ENCODE measurements at regions of chr17 and their contacts with region 1.

Region 1: DNA sequence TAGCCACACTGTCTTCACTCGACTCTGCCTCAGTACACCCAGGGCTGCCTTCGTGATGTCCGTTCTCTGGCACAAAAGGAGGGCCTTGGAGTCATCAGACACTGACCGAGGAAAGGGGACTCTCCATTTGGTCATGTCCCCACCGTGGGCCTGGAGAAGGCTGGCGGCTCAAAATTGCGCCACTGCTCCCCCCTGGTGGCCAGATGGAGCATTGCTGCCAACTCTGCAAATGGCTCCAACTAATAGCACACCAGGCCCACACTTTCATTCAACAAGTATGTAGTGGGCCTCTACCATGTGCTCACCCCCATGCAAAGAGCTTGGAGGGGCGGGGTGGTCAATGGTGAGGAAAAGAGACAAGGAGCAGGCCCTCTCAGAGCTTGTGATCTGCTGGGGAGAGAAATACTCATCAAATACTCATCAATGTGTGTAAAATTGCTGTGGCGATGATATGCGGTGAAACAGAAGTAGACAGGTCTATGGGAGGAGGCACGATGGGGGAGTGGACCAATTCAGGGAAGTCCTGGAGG is 5.2 kb upstream of the GRIN2C start:
- DNase-seq: no peak
- H3K4me3 ChIP-seq: no peak overlapping the region
- CTCF ChIP-seq: peak; percentile 92

Region 2: DNA sequence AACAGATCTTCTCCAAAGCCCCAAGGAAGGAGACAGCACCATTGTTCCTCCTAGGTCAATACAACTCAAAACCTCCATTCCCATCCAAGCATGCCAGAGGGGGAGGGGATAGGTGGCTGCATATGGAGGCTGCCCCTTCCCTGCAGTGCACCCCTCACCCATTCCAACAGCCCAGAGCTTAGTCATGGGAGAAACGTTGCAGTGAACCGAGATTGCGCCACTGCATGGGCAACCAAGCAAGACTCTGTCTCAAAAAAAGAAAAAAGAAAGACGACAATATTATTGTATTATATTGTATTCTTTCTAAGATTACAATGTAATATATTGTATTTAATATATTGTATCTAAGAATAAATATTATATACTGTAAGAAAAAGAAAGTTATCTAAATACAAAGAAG is 205.0 kb before region 1 on chr17:
- CTCF ChIA-PET with region 1: interaction called, 24 read pairs
- POLR2A ChIA-PET with region 1: interaction called, 3 read pairs
- DNase-seq: no peak
- H3K4me3 ChIP-seq: no peak overlapping the region
- CTCF ChIP-seq: no peak

Region 3: GRCh38 chr17:74742153-74742515 is 122.8 kb before region 1 on chr17:
- CTCF ChIA-PET with region 1: interaction called, 185 read pairs
- POLR2A ChIA-PET with region 1: no interaction called
- DNase-seq: no peak
- H3K4me3 ChIP-seq: no peak overlapping the region
- CTCF ChIP-seq: no peak

Region 4: GRCh38 chr17:74776044-74776977 is 88.6 kb before region 1 on chr17 and contains the start of gene NAT9:
- CTCF ChIA-PET with region 1: interaction called, 90 read pairs
- POLR2A ChIA-PET with region 1: no interaction called
- DNase-seq: peak; percentile 34
- H3K4me3 ChIP-seq: peak within 1 kb of the TSS; percentile 98
- CTCF ChIP-seq: no peak

Region 5: DNA sequence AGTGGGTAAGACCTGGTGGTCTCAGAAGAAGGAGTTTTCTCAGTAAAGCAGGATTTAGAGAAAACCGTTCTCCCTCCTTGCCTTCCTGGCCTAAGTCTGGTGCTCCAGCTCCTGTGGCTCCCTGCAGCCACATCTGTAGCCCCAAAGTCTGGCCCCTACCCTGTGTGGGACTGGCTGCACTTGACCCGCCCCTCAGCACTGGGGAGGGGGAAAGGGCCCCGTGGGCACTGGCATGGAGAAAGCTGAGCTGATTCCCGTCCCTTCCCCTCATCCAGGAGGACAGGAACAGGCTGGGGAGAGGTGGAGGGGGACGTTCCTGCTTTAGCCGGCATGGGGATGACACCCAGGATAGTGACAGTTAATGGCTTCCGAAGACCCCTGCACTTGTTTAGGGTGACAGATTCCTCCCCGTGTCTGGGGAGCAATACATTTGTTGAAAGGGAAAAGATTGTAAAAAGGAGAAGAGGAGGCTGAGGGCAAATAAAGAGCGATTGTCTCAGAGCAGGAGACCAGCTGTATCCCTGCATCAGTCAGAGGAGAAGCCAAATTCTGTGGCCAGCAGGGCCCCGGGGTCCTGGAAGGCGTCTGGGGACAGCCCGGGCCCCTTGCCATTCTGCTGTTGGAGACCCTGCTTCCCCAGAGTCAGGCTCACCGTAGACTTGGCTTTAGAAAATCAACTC is 43.1 kb before region 1 on chr17:
- CTCF ChIA-PET with region 1: interaction called, 12 read pairs
- POLR2A ChIA-PET with region 1: no interaction called
- DNase-seq: no peak
- H3K4me3 ChIP-seq: no peak overlapping the region
- CTCF ChIP-seq: no peak

Region 6: GRCh38 chr17:74842599-74843351 is 22.2 kb before region 1 on chr17:
- CTCF ChIA-PET with region 1: interaction called, 276 read pairs
- POLR2A ChIA-PET with region 1: no interaction called
- DNase-seq: no peak
- H3K4me3 ChIP-seq: peak overlapping the region; percentile 42
- CTCF ChIP-seq: peak; percentile 71

Region 7: GRCh38 chr17:74882255-74883040 is 17.5 kb after region 1 on chr17:
- CTCF ChIA-PET with region 1: interaction called, 14 read pairs
- POLR2A ChIA-PET with region 1: no interaction called
- DNase-seq: no peak
- H3K4me3 ChIP-seq: no peak overlapping the region
- CTCF ChIP-seq: no peak

Region 8: DNA sequence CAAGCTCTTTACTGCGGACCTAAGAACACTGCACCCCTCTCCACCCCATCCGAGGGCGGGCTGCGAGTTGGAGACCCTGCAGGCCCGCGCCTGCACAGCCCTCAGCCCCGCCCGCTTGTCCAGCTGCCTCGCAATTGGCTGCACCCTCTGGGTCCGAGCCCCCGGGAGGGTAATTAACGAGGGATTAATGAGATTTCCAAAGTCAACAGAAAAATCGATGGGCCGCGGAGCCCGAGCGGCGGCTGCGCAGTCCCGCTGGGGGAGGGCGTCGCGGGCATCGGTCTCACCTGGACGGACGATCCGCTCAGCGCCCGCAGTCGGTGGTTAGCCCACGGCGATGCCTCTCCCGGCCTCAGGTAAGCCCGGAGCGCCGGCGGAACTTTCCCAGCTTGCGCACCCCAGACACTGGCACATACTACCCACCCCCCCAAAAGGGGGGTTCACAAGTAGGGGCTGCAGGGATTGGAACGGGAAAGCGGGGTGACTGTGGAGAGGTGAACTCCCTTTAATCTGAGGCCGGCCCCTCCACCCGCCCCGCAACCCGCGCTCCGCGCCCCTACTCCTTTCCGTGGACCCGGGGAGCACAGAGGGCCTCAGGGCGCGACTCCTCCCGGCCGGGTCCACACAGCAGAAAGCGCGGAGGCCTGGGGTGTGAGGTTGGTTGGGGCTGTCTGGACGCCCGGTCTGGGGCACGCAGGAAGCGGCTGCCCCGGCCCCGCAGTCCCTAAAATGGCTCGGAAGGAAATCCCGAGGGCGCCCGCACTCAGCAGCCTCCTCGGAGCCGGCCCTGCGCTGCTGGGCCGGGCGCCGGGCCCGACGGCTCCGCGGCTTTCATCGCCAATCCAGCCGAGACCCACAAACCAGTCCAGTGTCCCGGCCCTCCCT is 70.9 kb after region 1 on chr17 and contains the start of gene OTOP3:
- CTCF ChIA-PET with region 1: no interaction called
- POLR2A ChIA-PET with region 1: no interaction called
- DNase-seq: no peak
- H3K4me3 ChIP-seq: no peak within 1 kb of the TSS
- CTCF ChIP-seq: no peak

Measured in AG04449 (cell line).